WTC11 (cell line): ENCODE measurements at regions of chr15 and their contacts with region 1.

Region 1: DNA sequence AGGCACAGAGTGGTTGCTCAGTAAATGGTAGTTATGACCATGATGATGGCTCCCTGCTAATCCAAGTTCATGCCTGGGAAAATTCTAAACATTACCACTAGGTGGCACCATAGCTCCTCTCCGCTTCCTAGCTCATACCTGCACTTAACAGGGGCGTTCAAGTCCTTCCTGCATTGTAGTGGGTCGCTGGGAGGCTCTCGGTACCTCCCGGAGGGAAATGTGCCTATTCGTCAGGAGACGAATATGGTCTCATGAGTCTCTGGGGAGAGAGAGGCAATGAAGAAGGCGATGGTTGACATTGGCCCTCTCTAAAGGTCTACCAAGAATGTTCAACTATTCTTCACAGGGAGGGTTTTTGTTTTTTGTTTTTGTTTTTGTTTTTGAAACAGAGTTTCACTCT is 10.9 kb downstream of the MESP1 start:
- DNase-seq: peak; percentile 69
- ATAC-seq: peak; percentile 97
- H3K4me3 Mint-ChIP-seq: no peak overlapping the region
- H3K27ac Mint-ChIP-seq: no peak overlapping the region
- H3K4me1 Mint-ChIP-seq: no peaks in the 10 kb centered on the region
- H3K27me3 Mint-ChIP-seq: peaks cover 4% of the 10 kb centered on the region
- CTCF ChIP-seq: peak; percentile 93

Region 2: DNA sequence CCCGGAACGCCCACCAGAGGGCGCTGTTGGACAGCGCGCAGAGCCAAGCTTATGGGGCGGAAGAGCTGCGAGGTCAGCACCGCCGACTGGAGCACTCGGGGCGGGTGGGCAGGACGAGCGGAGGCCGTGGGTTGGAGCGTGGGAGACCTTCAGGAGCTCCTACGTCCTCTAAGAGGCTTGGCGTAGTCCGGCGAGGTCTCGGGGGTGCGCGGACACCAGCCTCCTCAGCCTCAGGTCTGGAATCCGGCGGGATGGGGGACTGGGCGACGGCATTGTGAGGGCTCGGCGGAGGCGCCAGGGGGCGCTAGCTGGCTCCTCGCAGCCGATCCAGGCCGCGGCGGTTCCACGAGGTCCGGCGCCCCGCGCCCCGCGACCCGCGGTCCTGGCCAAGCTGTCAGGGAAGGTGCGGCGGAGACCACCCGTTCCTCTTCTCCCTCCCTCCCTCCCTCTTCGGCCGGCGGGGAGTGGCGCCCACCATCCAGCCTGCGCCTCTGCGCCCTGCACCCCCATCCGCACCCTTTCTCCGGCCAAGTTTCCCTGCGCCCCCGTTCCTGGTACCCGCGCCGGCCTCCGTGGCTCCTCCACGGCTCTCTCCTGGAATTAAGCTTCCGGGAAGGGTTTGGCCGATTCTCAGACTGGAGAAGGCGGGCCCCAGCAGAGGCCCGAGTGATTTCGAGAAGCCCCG is 381.2 kb before region 1 on chr15:
- CTCF ChIA-PET with region 1: no interaction called
- POLR2A ChIA-PET with region 1: no interaction called
- DNase-seq: peak; percentile 74
- ATAC-seq: peak; percentile 50
- H3K4me3 Mint-ChIP-seq: peak overlapping the region; percentile 64
- H3K27ac Mint-ChIP-seq: no peak overlapping the region
- H3K4me1 Mint-ChIP-seq: peaks cover 24% of the 10 kb centered on the region
- H3K27me3 Mint-ChIP-seq: peaks cover 96% of the 10 kb centered on the region
- CTCF ChIP-seq: peak; percentile 99

Region 3: GRCh38 chr15:89673165-89673512 is 67.0 kb before region 1 on chr15:
- CTCF ChIA-PET with region 1: interaction called, 13 read pairs
- POLR2A ChIA-PET with region 1: no interaction called
- DNase-seq: peak; percentile 86
- ATAC-seq: peak; percentile 96
- H3K4me3 Mint-ChIP-seq: no peak overlapping the region
- H3K27ac Mint-ChIP-seq: no peak overlapping the region
- H3K4me1 Mint-ChIP-seq: no peaks in the 10 kb centered on the region; the same call in 1 of the 2 replicates
- H3K27me3 Mint-ChIP-seq: peaks cover 2% of the 10 kb centered on the region; the same call in 1 of the 2 replicates
- CTCF ChIP-seq: peak; percentile 67

Region 4: DNA sequence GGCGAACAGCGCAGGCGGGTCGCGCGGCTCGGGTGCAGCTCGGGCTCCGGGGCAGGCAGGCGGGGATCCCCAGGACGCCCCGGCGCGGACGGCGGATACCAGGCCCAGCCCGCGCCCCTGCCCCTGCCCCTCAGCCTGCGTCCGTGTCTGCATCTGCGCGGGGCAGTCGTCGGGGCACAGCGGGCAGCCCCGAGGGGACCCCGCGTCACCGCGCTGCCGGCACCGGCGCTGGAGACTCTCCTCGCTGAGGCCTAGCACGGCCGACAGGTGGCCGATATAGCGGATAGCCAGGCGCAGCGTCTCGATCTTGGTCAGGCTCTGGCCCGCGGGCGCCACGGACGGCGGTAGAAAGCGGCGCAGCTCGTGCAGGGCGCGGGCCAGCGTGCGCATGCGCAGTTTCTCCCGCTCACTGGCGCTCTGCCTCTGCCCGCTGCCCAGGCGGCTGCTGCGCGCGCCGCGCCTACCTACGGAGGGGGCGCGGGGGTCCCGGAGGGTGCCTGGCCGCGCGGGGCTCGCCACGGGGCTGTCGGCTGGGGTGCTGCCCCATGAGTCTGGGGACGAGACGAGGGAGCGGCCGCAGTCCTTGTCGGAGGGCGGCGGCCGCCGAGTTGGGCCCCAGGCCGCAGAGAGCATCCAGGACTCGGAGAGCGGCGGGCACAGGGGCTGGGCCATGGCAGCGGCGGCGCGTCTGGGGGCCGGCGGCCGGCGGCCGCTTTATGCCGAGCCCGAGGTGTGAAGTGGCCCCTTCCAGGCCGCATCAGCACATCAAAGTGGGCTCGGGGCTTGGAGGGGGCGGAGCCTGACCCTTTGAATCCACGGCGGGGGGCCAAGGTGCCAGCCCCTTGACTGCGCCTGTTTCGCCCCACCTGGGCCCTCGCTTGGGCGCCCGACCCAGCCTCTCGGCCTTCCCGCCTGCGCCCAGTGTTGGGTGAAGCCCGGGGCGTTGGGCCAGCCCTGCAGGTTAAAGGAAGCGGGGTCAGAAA is 10.7 kb after region 1 on chr15 and contains the start of gene MESP1:
- CTCF ChIA-PET with region 1: interaction called, 10 read pairs
- POLR2A ChIA-PET with region 1: no interaction called
- DNase-seq: peak; percentile 93
- ATAC-seq: peak; percentile 87
- H3K4me3 Mint-ChIP-seq: peak within 1 kb of the TSS; percentile 62
- H3K27ac Mint-ChIP-seq: no peak within 1 kb of the TSS
- H3K4me1 Mint-ChIP-seq: peaks cover 20% of the 10 kb centered on the region; the same call in 1 of the 2 replicates
- H3K27me3 Mint-ChIP-seq: peaks cover 40% of the 10 kb centered on the region
- CTCF ChIP-seq: no peak
- total RNA-seq, gene MESP1: 0.32 to 0.50 TPM (median 0.41 TPM) in 3 replicates

Region 5: GRCh38 chr15:89776274-89777072 is 36.3 kb after region 1 on chr15 and contains the start of gene MESP2:
- CTCF ChIA-PET with region 1: interaction called, 12 read pairs
- POLR2A ChIA-PET with region 1: no interaction called
- DNase-seq: peak; percentile 91
- ATAC-seq: peak; percentile 96
- H3K4me3 Mint-ChIP-seq: peak within 1 kb of the TSS; percentile 60
- H3K27ac Mint-ChIP-seq: no peak within 1 kb of the TSS
- H3K4me1 Mint-ChIP-seq: 0 out of 2 replicates have a peak, but pooled peaks cover 2% of the 10 kb centered on the region
- H3K27me3 Mint-ChIP-seq: peaks cover 42% of the 10 kb centered on the region
- CTCF ChIP-seq: no peak
- total RNA-seq, gene MESP2: 0.66 to 1.0 TPM (median 0.68 TPM) in 3 replicates

Region 6: DNA sequence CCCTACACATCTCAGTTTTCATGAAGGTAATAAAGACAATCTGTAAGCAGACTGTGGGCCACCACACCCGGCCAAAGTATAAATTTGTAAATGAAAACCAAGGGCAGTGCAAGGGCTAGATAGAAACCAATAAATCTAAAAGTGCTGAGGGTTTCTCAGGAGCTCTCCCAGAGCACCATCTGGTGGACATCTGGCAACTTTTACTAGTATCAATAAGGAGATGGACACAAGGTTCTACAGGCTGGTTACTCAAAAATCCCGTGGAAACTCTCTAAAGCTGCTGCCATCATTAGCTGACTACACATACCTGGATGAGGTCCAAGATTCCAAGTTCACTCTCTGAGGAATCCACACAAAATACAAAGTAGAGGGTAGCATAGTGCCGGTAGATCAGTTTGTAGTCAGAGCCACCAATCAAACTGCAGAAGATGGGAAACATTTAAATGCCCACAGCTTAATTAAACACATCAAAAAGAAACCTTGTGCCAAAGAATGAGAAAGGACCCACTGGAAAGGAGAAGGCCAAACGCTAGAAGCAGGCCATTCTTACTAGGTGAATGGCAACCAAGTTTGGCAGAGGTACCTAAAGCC is 148.2 kb after region 1 on chr15:
- CTCF ChIA-PET with region 1: interaction called, 15 read pairs
- POLR2A ChIA-PET with region 1: no interaction called
- DNase-seq: no peak
- ATAC-seq: peak; percentile 24; the same call in 1 of the 2 replicates
- H3K4me3 Mint-ChIP-seq: no peak overlapping the region
- H3K27ac Mint-ChIP-seq: no peak overlapping the region
- H3K4me1 Mint-ChIP-seq: peaks cover 6% of the 10 kb centered on the region
- H3K27me3 Mint-ChIP-seq: no peaks in the 10 kb centered on the region
- CTCF ChIP-seq: no peak